ENCODE measurements at regions of chr9 and their contacts with region 1.

Region 1: DNA sequence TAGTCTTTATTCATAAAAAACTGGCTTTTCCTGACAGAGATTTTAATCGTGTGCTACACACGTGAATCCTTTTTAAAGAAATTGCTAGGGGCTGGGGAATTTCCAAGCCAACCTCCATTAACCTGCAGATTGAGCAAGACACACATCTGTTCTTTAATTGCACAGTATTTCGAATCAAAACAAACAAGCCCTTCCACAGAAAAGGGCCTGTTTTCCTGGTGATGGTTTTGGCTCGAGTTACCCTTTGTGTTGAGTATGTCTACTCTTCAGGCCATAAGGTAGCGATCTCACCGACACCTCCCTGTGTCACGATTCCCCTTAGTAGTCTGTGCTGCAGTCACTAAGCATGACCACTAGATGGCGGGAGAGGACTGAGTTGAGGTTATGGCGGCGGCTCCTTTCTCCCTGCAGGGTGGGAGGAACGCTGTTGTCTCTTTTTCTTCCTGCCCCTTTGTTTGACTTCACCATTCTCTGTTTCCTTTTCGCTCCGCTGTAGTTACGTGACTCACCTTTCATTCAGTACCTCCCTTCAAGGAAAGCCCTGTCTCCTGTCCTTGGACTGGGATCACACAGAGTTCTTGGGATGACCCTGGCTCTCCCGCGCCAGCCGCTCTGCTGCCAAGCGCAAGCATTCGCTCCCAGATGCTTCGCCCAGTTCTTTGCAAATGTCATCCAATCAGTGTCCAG is 137.1 kb upstream of the SLC24A2 start:
- DNase-seq: peak; percentile 74
- H3K4me3 Mint-ChIP-seq: peak overlapping the region; percentile 64
- H3K27ac Mint-ChIP-seq: no peak overlapping the region
- H3K4me1 Mint-ChIP-seq: peaks cover 14% of the 10 kb centered on the region
- H3K27me3 Mint-ChIP-seq: peaks cover 24% of the 10 kb centered on the region

Region 2: GRCh38 chr9:19976226-19976625 is 50.3 kb after region 1 on chr9:
- intact Hi-C with region 1: loop called (anchors 5 kb)
- DNase-seq: no peak
- H3K4me3 Mint-ChIP-seq: no peak overlapping the region
- H3K27ac Mint-ChIP-seq: peak overlapping the region; percentile 83
- H3K4me1 Mint-ChIP-seq: peaks cover 28% of the 10 kb centered on the region
- H3K27me3 Mint-ChIP-seq: no peaks in the 10 kb centered on the region

Region 3: GRCh38 chr9:20043035-20043434 is 117.1 kb after region 1 on chr9:
- intact Hi-C with region 1: loop called (anchors 2 kb)
- DNase-seq: no peak
- H3K4me3 Mint-ChIP-seq: peak overlapping the region; percentile 71
- H3K27ac Mint-ChIP-seq: peak overlapping the region; percentile 70
- H3K4me1 Mint-ChIP-seq: peaks cover 30% of the 10 kb centered on the region
- H3K27me3 Mint-ChIP-seq: peaks cover 2% of the 10 kb centered on the region

Region 4: GRCh38 chr9:20331095-20331685 is 405.2 kb after region 1 on chr9:
- intact Hi-C with region 1: loop called (anchors 5 kb)
- DNase-seq: no peak
- H3K4me3 Mint-ChIP-seq: no peak overlapping the region
- H3K27ac Mint-ChIP-seq: peak overlapping the region; percentile 21
- H3K4me1 Mint-ChIP-seq: peaks cover 31% of the 10 kb centered on the region
- H3K27me3 Mint-ChIP-seq: peaks cover 6% of the 10 kb centered on the region

Region 5: DNA sequence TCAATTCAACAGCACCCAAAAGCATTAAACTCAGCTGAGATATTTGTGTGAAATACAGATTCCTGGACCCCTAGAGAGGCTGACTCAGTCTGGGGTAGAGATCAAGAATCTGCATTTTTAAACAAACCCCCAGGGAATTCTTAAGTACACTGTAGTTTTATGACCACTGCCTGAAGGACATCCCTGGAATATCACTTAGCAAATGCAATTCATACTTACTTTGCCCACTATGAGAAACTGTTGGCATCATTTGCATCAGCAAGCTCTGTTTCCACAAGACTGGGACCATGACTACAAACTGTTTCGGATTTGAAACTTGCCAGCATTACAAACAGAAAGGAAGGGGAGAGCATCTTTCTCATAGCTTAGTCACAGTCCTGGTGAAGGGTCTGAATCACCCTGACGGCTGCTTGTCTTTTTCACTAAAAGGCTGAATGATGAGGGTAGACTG is 632.6 kb after region 1 on chr9:
- intact Hi-C with region 1: loop called (anchors 10 kb)
- DNase-seq: no peak
- H3K4me3 Mint-ChIP-seq: no peak overlapping the region
- H3K27ac Mint-ChIP-seq: peak overlapping the region; percentile 54
- H3K4me1 Mint-ChIP-seq: peaks cover 72% of the 10 kb centered on the region
- H3K27me3 Mint-ChIP-seq: no peaks in the 10 kb centered on the region

Region 6: GRCh38 chr9:20670395-20670794 is 744.4 kb after region 1 on chr9:
- intact Hi-C with region 1: no loop called
- DNase-seq: no peak
- H3K4me3 Mint-ChIP-seq: no peak overlapping the region
- H3K27ac Mint-ChIP-seq: no peak overlapping the region
- H3K4me1 Mint-ChIP-seq: no peaks in the 10 kb centered on the region
- H3K27me3 Mint-ChIP-seq: peaks cover 3% of the 10 kb centered on the region

Region 7: DNA sequence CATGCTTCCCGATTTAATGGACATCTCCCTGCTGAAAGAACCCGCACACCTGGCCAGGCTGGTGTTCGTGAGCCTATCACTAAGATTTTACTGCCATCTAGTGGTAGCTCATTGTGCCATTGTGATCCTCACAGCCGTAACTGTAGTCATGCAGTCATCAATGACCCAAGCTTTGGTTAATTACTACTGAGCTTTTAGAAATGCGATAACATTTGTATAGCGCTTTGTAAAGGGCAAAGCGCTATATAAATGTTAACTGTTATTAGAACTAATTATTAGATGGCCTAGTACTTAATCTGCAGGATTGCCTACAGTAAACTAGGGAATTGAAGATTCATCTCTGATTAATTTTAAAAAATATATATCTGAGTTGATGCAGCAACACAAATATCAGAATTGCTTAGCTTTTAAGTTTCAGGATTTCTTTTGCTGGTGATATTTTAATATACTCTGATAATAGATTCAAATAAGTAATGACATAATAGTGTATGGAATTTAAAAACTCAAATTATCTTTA is 1015.3 kb after region 1 on chr9:
- intact Hi-C with region 1: loop called (anchors 1 kb)
- DNase-seq: peak; percentile 40
- H3K4me3 Mint-ChIP-seq: no peak overlapping the region
- H3K27ac Mint-ChIP-seq: no peak overlapping the region
- H3K4me1 Mint-ChIP-seq: peaks cover 3% of the 10 kb centered on the region
- H3K27me3 Mint-ChIP-seq: no peaks in the 10 kb centered on the region

Region 8: GRCh38 chr9:21110708-21111576 is 1185.0 kb after region 1 on chr9:
- intact Hi-C with region 1: loop called (anchors 5 kb)
- DNase-seq: no peak
- H3K4me3 Mint-ChIP-seq: no peak overlapping the region
- H3K27ac Mint-ChIP-seq: no peak overlapping the region
- H3K4me1 Mint-ChIP-seq: no peaks in the 10 kb centered on the region
- H3K27me3 Mint-ChIP-seq: peaks cover 27% of the 10 kb centered on the region

Measured in activated T-helper 2 cell treated with anti-CD3 and anti-CD28 coated beads, Interferon-gamma antibody, Interleukin-2, Interleukin-4, amounts not matched to agents 10 μg/mL and 5 μg/mL and 100 μg/mL, durations not matched to agents 14 hours and 24 hours and 36 hours (primary cell).